ENCODE measurements at regions of chr12 and their contacts with region 1.

Region 1: DNA sequence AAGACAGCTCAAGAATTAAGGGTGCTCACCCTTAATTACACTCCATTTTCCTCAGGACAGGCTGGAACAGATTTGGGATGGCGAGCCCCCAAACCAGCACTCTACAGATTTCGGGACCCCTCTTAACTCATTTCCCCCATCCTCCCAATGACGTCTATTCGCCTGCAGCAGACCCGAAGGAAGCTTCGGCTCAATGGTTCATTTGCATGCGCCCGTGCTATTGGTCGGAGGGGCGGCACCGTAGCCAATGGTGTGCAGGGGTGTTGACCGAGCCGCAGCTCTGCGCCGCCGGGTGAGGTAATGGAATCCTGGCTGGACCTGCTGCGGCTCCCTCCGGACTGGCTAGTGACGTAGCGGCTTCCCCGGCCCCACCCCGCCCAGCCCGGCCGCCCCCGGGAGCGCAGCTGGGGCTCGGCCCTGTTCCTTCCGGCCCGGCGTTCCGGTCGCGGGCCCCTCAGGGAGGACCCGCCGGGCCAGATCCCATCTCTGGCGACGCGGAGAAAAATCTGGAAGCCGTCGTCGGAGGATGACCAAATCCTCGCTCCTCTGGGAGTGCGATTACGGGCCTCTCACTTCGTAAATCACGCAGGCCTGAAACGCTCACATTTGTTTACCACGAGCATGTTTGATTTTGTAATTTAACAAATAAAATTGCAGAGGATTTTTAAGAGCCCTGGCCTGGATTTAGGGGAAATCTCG is 18.3 kb upstream of the NR4A1 start:
- DNase-seq: peak; percentile 94
- H3K4me3 Mint-ChIP-seq: peak overlapping the region; percentile 56
- H3K27ac Mint-ChIP-seq: peak overlapping the region; percentile 47
- H3K4me1 Mint-ChIP-seq: peaks cover 36% of the 10 kb centered on the region
- H3K27me3 Mint-ChIP-seq: no peaks in the 10 kb centered on the region

Region 2: DNA sequence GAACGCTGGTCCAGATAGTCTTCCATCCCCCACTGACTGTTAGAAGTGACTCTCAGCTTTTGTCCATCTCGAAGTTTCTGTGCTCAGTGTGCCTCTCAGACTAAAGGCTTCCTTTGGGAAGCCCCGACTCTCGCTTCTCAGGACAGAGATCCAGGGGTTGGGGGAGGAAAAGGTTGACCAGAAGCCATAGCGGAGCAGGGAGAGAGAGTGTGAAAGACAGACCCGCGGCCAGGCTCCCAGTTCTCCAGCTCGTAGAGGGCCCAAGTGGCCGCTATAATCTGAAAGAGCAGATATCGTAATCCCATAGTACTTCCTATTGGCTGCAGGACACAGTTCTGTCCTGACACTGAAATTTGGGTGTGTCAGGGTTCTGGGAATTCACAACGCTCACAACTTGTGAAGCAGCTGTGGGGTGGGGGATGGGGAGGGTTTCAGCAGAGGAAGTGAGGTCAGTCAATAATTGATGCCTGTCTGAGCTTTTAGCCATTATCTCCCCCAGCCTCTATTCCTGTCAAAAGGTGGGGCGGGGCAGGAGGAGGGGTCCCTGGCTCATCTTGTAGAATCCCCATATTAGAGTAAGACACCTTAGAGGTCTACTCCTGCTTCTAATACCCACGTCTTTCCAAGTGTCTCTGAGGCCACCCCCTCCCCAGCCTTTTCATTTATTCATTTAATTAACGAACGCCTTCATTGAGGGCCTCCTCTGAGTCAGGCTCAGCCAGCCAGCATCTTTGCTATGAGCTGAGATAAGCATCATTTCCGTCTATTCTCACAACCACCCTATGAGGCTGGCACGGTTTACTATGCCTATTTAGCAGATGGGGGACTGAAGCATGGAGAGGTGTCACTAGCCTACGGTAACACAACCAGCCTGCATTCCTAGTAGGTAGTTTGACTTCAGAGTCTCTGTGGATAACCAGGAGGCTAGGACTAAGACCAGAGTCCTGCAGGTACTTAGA is 127.2 kb before region 1 on chr12:
- CTCF ChIA-PET with region 1: no interaction called
- intact Hi-C with region 1: no loop called
- DNase-seq: no peak
- H3K4me3 Mint-ChIP-seq: no peak overlapping the region
- H3K27ac Mint-ChIP-seq: no peak overlapping the region
- H3K4me1 Mint-ChIP-seq: no peaks in the 10 kb centered on the region
- H3K27me3 Mint-ChIP-seq: peaks cover 19% of the 10 kb centered on the region

Region 3: DNA sequence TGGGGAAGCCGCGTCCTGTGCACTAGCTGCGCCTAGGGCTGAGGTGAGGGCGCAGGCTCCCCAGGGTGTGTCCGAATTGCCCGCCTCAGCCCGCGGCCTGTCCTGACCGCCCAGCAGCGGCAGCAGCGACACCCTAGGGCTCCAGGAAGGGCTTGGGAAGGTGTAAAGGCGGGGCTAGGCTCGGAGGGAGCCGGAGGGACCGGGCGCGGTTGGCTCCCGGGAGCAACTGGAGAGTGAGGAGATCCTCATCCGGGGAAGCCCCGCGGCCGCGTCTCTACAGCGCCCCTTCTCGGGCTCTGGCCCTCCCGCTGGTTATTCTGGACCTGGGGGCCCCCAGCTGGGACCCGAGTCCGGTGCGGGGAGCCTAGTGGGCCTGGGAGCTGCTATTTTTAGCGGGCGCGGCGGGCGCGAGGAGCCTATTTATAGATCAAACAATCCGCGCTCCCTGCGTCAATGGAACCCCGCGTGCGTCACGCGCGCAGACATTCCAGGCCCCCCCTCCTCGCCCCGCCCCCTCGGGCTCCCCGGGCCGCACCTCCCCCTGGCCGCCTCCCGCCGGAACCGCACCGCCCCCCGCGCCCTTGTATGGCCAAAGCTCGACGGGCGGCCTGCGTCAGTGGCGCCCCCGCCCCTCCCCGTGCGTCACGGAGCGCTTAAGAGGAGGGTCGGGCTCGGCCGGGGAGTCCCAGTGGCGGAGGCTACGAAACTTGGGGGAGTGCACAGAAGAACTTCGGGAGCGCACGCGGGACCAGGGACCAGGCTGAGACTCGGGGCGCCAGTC is 18.0 kb after region 1 on chr12 and contains the start of gene NR4A1:
- CTCF ChIA-PET with region 1: interaction called, 6 read pairs
- intact Hi-C with region 1: loop called (anchors 1 kb)
- DNase-seq: peak; percentile 99
- H3K4me3 Mint-ChIP-seq: peak within 1 kb of the TSS; percentile 98
- H3K27ac Mint-ChIP-seq: peak within 1 kb of the TSS; percentile 84
- H3K4me1 Mint-ChIP-seq: peaks cover 44% of the 10 kb centered on the region
- H3K27me3 Mint-ChIP-seq: no peaks in the 10 kb centered on the region
- total RNA-seq, gene NR4A1: 64.2 to 64.8 TPM

Region 4: GRCh38 chr12:52069327-52070184 is 36.6 kb after region 1 on chr12 and contains the start of gene ATG101:
- CTCF ChIA-PET with region 1: interaction called, 315 read pairs
- intact Hi-C with region 1: loop called (anchors 1 kb)
- DNase-seq: peak; percentile 92
- H3K4me3 Mint-ChIP-seq: peak within 1 kb of the TSS; percentile 93
- H3K27ac Mint-ChIP-seq: peak within 1 kb of the TSS; percentile 98
- H3K4me1 Mint-ChIP-seq: peaks cover 44% of the 10 kb centered on the region
- H3K27me3 Mint-ChIP-seq: no peaks in the 10 kb centered on the region
- total RNA-seq, gene ATG101: 21.8 to 22.0 TPM

Region 5: DNA sequence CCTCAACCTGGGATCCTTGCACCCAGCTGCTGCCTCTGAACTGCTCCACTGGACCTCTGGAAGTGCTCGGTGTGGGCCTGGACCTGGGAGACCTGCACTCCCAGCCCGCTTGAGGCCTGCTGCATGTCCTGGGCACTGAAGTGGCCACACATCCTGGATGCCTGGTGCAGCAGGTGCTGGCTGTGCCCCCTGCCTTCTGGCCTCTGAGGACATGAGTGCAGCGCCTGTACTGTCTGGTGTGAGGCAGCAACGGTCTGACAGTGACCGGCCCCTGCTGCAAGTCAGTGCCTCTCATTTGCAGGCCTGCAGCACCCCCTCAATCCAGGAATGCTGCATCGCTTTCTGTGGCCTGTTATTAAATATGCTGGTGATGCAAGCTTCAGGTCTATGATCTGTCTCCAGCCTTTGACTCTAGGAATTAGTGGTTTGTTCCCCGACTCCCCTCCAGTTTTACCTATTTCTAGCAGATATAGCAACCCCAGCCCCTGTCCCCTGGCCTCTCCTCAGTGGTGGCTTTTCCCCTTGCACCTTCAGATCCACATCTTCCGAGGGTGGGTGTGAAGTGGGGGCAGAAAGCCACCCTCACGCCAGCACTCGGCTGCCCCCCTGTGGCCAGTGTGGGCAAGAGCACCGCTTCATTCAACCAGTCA is 50.2 kb after region 1 on chr12:
- CTCF ChIA-PET with region 1: interaction called, 306 read pairs
- intact Hi-C with region 1: no loop called
- DNase-seq: peak; percentile 69
- H3K4me3 Mint-ChIP-seq: no peak overlapping the region
- H3K27ac Mint-ChIP-seq: no peak overlapping the region
- H3K4me1 Mint-ChIP-seq: peaks cover 10% of the 10 kb centered on the region
- H3K27me3 Mint-ChIP-seq: peaks cover 4% of the 10 kb centered on the region